ENCODE measurements at regions of chr16 and their contacts with region 1.

Region 1: GRCh38 chr16:56866943-56867830 is 2.2 kb downstream of the SLC12A3 start:
- DNase-seq: peak in 1 of 2 donors; percentile 43
- H3K4me3 ChIP-seq: no peak overlapping the region
- CTCF ChIP-seq: peak in 1 of 3 donors; percentile 28
- POLR2A ChIP-seq: no peak

Region 2: GRCh38 chr16:56950881-56951771 is 83.9 kb after region 1 on chr16:
- intact Hi-C with region 1: loop called (anchors 10 kb)
- DNase-seq: no peak
- H3K4me3 ChIP-seq: no peak overlapping the region
- CTCF ChIP-seq: no peak
- POLR2A ChIP-seq: no peak

Region 3: GRCh38 chr16:57045694-57046381 is 178.7 kb after region 1 on chr16:
- intact Hi-C with region 1: loop called (anchors 5 kb)
- DNase-seq: peak; percentile 72 to 94
- H3K4me3 ChIP-seq: no peak overlapping the region
- CTCF ChIP-seq: no peak
- POLR2A ChIP-seq: no peak

Measured in lower leg skin (tissue), 4 donors.